ENCODE measurements at regions of chr10 and their contacts with region 1.

Region 1: GRCh38 chr10:15254808-15255648 is 86.5 kb upstream of the NMT2 start:
- DNase-seq: peak; percentile 57
- H3K4me3 Mint-ChIP-seq: peak overlapping the region; percentile 77
- H3K27ac Mint-ChIP-seq: peak overlapping the region; percentile 56
- H3K4me1 Mint-ChIP-seq: peaks cover 23% of the 10 kb centered on the region
- H3K27me3 Mint-ChIP-seq: no peaks in the 10 kb centered on the region

Region 2: DNA sequence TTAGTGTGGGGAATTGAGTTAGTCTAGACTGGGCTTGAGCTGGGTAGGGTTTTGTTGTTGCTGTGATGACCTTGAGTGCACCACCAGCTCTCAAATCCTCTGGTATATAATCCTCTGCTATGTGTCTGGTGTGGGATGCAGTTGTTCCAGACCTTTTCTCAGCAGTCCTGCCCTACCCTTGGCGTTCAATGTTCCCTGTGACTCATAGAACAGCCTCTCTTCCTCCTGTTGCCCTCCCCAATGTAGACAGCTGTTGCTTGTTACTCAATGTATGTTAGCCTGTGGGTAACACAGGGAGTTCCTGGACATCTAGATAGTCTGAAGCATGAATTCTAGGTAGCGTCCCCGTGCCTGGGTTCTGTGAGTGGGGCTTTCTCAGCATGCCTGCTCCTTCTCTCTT is 186.2 kb before region 1 on chr10:
- CTCF ChIA-PET with region 1: no interaction called
- POLR2A ChIA-PET with region 1: no interaction called
- intact Hi-C with region 1: no loop called
- DNase-seq: no peak
- H3K4me3 Mint-ChIP-seq: no peak overlapping the region
- H3K27ac Mint-ChIP-seq: no peak overlapping the region
- H3K4me1 Mint-ChIP-seq: no peaks in the 10 kb centered on the region
- H3K27me3 Mint-ChIP-seq: peaks cover 3% of the 10 kb centered on the region

Region 3: GRCh38 chr10:15278786-15279185 is 23.8 kb after region 1 on chr10:
- CTCF ChIA-PET with region 1: no interaction called
- POLR2A ChIA-PET with region 1: no interaction called
- intact Hi-C with region 1: loop called (anchors 1 kb)
- DNase-seq: no peak
- H3K4me3 Mint-ChIP-seq: no peak overlapping the region
- H3K27ac Mint-ChIP-seq: no peak overlapping the region
- H3K4me1 Mint-ChIP-seq: no peaks in the 10 kb centered on the region
- H3K27me3 Mint-ChIP-seq: no peaks in the 10 kb centered on the region

Measured in activated CD4-positive, alpha-beta memory T cell treated with anti-CD3 and anti-CD28 coated beads for 36 hours (primary cell).